ENCODE measurements at regions of chr1 and their contacts with region 1.

Region 1: DNA sequence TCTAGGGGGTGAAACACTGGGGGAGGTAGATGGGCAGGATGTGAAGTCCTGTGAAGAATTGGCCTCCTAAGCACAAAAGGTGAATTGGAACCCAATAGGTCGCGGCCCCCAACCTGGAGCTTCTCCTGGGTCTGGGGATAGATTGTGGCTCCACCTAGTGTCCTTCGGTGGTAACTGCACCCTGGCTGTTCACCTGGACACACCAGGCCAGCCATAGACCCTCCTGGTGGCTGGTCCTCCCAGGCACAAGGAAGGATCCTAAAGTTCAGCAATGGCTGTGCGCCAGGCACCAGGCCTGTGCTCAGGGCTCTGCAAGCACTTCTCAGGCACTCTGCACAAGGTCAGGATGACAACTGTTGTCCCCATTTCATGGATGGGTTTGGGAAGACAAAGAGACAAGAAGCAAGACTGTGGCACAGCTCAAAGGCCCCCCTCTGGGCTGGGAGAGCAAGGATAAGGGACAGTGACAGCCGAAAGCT is 13.5 kb downstream of the ESPN start:
- DNase-seq: peak; percentile 94
- ATAC-seq: peak; percentile 78
- H3K4me3 Mint-ChIP-seq: peak overlapping the region; percentile 44; the same call in 1 of the 2 replicates
- H3K27ac Mint-ChIP-seq: no peak overlapping the region
- H3K4me1 Mint-ChIP-seq: peaks cover 28% of the 10 kb centered on the region
- H3K27me3 Mint-ChIP-seq: peaks cover 33% of the 10 kb centered on the region
- CTCF ChIP-seq: peak; percentile 99

Region 2: DNA sequence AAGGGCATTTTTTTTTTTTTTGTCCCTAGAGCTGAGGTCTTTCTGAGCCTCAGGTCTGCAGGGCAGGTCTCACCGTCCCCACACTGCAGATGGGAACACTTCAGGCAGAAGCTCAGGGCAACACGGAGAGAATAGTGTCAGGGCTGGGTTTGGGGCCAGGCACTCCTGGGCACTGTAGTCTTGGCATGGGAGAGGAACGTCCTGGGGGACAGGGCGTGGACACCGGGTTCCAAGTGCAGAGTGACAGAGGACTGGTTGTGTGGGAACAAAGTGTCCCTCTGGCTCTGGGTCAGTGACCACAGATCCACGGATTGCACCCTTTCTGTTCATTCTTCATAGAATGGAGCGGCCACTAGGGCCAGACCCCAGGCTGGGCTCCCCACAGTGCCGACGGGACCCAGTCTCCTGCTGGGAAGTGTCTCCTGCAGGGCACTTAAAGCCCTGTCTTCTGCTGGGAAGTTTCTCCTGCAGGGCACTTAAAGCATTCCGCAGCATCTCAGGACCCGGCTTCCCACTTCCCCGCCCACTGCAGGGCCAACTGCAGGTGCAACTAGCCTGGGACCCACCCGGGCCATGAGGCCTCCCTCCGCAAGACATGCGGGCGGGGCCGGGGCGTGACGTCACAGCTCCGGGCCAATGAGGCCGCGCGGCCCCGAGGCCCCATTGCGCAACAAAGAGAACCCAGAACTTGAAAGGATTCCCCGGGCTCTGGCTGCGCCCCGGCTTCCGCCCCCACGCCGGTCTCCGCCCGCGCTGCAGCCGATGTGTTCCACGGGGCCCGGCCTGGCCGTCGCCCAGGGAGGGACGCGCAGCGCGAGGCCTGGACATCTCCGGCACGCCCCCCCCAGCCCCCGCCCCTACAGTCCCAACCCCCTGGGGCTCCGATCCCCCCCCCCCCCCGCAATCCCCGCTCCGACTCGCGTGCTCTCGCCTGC is 178.3 kb before region 1 on chr1:
- CTCF ChIA-PET with region 1: interaction called, 10 read pairs
- POLR2A ChIA-PET with region 1: no interaction called
- DNase-seq: peak; percentile 90
- ATAC-seq: peak; percentile 40
- H3K4me3 Mint-ChIP-seq: peak overlapping the region; percentile 49
- H3K27ac Mint-ChIP-seq: no peak overlapping the region
- H3K4me1 Mint-ChIP-seq: peaks cover 9% of the 10 kb centered on the region
- H3K27me3 Mint-ChIP-seq: peaks cover 21% of the 10 kb centered on the region
- CTCF ChIP-seq: no peak

Region 3: DNA sequence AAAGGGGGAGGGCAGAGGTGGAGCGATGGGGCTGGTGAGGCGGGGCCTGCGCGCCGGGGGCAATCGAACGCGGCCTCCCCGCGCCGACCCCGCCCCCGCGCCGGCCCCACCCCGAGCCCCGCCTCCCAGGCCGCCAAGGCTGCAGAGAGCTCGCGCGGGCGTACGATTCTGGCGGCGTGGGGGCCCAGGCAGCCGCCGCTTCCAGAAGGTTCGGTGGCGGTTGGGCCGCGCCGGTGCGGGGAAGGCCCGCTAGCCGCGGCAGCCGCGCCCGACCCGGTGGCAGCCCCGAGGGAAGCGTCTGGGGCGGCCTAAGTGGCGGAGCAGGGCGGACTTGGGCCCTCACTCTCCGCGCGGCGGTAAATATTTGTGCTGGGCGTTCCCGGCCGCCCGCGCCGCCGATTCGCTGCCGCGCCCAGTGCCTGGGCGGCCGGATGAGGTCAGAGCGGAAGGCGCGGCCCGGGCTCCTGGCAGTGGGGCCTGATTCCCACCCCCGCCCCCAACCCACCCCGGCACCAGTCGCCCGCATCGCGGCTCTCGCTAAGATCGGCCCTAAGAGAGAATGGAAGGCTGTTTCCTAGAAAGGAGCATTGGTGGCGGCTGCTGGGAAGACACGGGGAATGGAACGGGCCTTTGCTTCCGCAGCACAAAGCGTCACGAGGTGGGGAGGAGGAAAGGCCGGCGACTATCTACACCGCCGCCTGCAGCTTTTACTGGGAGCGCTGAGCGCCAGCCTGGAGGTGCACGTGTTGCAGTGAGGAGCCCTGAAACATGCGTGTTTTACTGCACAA is 44.5 kb before region 1 on chr1 and contains the start of gene ACOT7:
- CTCF ChIA-PET with region 1: interaction called, 19 read pairs
- POLR2A ChIA-PET with region 1: no interaction called
- DNase-seq: peak; percentile 89
- ATAC-seq: peak; percentile 88
- H3K4me3 Mint-ChIP-seq: peak within 1 kb of the TSS; percentile 80
- H3K27ac Mint-ChIP-seq: peak within 1 kb of the TSS; percentile 95
- H3K4me1 Mint-ChIP-seq: peaks cover 18% of the 10 kb centered on the region
- H3K27me3 Mint-ChIP-seq: peaks cover 9% of the 10 kb centered on the region
- CTCF ChIP-seq: no peak
- total RNA-seq, gene ACOT7: 133 to 151 TPM (median 137 TPM) in 3 replicates

Region 4: DNA sequence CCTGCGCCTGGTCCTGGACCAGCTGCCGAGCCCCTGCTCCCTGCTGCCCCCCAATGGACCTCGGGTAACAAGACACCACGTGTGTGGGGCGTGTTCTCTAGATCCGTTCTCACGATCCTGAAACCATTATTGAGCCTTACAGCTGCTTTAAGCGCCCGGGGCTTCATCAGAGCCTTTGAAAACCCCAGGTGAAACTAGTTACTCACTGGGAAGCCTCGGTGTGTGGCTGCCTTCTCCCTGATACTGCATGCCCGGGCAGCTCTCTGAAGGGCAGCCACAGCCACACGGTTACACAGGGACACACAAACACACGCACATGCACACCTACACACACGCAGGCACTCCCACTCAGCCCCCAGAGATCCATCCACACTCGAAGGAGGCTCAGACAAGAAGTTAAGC is 23.6 kb before region 1 on chr1:
- CTCF ChIA-PET with region 1: interaction called, 281 read pairs
- POLR2A ChIA-PET with region 1: no interaction called
- DNase-seq: peak; percentile 86
- ATAC-seq: peak; percentile 89
- H3K4me3 Mint-ChIP-seq: peak overlapping the region; percentile 47
- H3K27ac Mint-ChIP-seq: peak overlapping the region; percentile 95
- H3K4me1 Mint-ChIP-seq: peaks cover 20% of the 10 kb centered on the region
- H3K27me3 Mint-ChIP-seq: peaks cover 78% of the 10 kb centered on the region
- CTCF ChIP-seq: peak; percentile 62; the same call in 1 of the 2 replicates

Region 5: GRCh38 chr1:6464514-6464836 is 26.4 kb after region 1 on chr1:
- CTCF ChIA-PET with region 1: interaction called, 73 read pairs
- POLR2A ChIA-PET with region 1: no interaction called
- DNase-seq: no peak
- ATAC-seq: no peak
- H3K4me3 Mint-ChIP-seq: peak overlapping the region; percentile 13; the same call in 1 of the 2 replicates
- H3K27ac Mint-ChIP-seq: peak overlapping the region; percentile 49; the same call in 1 of the 2 replicates
- H3K4me1 Mint-ChIP-seq: peaks cover 20% of the 10 kb centered on the region
- H3K27me3 Mint-ChIP-seq: peaks cover 2% of the 10 kb centered on the region; the same call in 1 of the 2 replicates
- CTCF ChIP-seq: no peak

Region 6: DNA sequence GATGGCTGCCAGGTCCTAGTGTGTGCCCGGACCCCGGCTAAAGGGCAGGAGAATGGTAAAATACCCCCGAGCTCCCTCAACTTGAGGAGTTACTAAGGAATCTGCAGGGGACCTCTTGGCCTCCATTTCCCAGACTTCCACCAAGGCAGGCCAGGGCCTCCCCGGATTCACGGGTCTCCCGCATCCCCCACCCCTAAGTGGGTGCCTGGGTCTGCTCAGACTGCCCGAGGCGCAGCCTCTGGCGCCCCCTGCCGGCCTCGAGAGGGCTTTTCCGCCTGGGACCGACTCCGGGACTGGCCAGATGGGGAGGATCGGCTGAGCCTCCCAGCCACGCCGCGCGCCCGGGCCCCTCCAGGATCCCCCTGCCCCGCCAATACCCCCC is 51.7 kb after region 1 on chr1:
- CTCF ChIA-PET with region 1: interaction called, 23 read pairs
- POLR2A ChIA-PET with region 1: no interaction called
- DNase-seq: peak; percentile 87
- ATAC-seq: peak; percentile 46
- H3K4me3 Mint-ChIP-seq: peak overlapping the region; percentile 77
- H3K27ac Mint-ChIP-seq: no peak overlapping the region
- H3K4me1 Mint-ChIP-seq: peaks cover 30% of the 10 kb centered on the region
- H3K27me3 Mint-ChIP-seq: peaks cover 2% of the 10 kb centered on the region; the same call in 1 of the 2 replicates
- CTCF ChIP-seq: peak; percentile 99